Endothelial cell of umbilical vein (primary cell): ENCODE measurements at regions of chr13 and their contacts with region 1.

Region 1: DNA sequence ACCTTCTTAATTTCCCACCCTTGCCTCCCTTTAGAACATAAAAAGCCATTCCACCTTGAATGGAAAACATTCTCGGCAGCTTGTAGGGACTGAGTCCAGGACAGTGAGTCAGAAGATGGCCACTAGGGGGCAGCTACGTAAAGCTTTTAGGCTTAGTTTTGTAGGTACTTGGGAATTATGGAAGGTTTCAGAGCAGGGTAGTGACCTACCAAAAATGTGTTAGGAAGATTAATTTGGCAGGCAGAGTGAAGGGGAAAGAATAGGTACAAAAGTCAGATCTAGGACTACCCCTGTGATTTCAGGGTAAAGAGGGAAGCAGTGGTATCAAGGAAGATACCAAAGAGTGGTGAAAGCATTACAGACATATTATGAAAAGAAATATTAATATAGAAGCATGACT is 198.4 kb downstream of the NDFIP2 start:
- DNase-seq: peak; percentile 83
- H3K4me3 ChIP-seq: no peak overlapping the region
- H3K27ac ChIP-seq: no peak overlapping the region
- H3K4me1 ChIP-seq: no peaks in the 10 kb centered on the region
- H3K27me3 ChIP-seq: no peaks in the 10 kb centered on the region
- CTCF ChIP-seq: peak; percentile 70 to 80
- POLR2A ChIP-seq: no peak

Region 2: GRCh38 chr13:79724348-79725103 is 45.2 kb after region 1 on chr13:
- CTCF ChIA-PET with region 1: interaction called, 6 read pairs
- POLR2A ChIA-PET with region 1: no interaction called
- dilution Hi-C with region 1: no loop called
- intact Hi-C with region 1: loop called (anchors 1 kb)
- DNase-seq: peak; percentile 93
- H3K4me3 ChIP-seq: no peak overlapping the region
- H3K27ac ChIP-seq: peak overlapping the region; percentile 24
- H3K4me1 ChIP-seq: peaks cover 3% of the 10 kb centered on the region
- H3K27me3 ChIP-seq: no peaks in the 10 kb centered on the region
- CTCF ChIP-seq: no peak
- POLR2A ChIP-seq: no peak

Region 3: GRCh38 chr13:79782541-79783205 is 103.3 kb after region 1 on chr13:
- CTCF ChIA-PET with region 1: interaction called, 10 read pairs
- POLR2A ChIA-PET with region 1: no interaction called
- dilution Hi-C with region 1: no loop called
- intact Hi-C with region 1: no loop called
- DNase-seq: peak; percentile 93
- H3K4me3 ChIP-seq: no peak overlapping the region
- H3K27ac ChIP-seq: peak overlapping the region; percentile 19
- H3K4me1 ChIP-seq: peaks cover 16% of the 10 kb centered on the region
- H3K27me3 ChIP-seq: no peaks in the 10 kb centered on the region
- CTCF ChIP-seq: no peak
- POLR2A ChIP-seq: no peak

Region 4: DNA sequence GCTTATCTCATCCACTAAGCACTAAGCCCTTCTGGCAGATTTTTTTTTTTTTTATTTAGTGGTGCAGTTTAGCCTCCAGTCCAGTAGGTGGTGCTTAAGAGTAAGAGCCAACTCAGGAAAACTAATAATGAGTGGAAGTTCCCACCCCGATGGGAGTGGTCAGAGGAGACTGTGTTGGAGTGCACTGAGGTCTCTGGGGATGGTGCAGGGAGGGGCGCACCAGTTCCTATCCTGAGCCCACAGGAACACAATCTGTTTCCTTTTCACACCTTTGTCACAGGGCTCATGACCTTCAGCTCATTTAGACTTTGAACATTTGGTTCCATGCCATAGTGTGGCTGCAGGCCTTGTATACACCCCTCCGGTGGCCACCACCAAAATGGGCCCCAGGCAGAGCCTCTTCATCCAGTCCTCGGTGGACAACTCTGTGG is 294.2 kb after region 1 on chr13:
- CTCF ChIA-PET with region 1: no interaction called
- POLR2A ChIA-PET with region 1: no interaction called
- dilution Hi-C with region 1: no loop called
- intact Hi-C with region 1: loop called (anchors 10 kb)
- DNase-seq: no peak
- H3K4me3 ChIP-seq: no peak overlapping the region
- H3K27ac ChIP-seq: no peak overlapping the region
- H3K4me1 ChIP-seq: no peaks in the 10 kb centered on the region
- H3K27me3 ChIP-seq: no peaks in the 10 kb centered on the region
- CTCF ChIP-seq: peak; percentile 36
- POLR2A ChIP-seq: no peak

Region 5: GRCh38 chr13:80235166-80235966 is 556.0 kb after region 1 on chr13:
- CTCF ChIA-PET with region 1: interaction called, 11 read pairs
- POLR2A ChIA-PET with region 1: no interaction called
- dilution Hi-C with region 1: no loop called
- intact Hi-C with region 1: no loop called
- DNase-seq: peak; percentile 79
- H3K4me3 ChIP-seq: peak overlapping the region in 1 of 3 experiments; percentile 41
- H3K27ac ChIP-seq: peak overlapping the region; percentile 89
- H3K4me1 ChIP-seq: peaks cover 18% of the 10 kb centered on the region
- H3K27me3 ChIP-seq: no peaks in the 10 kb centered on the region
- CTCF ChIP-seq: no peak
- POLR2A ChIP-seq: no peak

Region 6: GRCh38 chr13:80630685-80631121 is 951.4 kb after region 1 on chr13:
- CTCF ChIA-PET with region 1: interaction called, 8 read pairs
- POLR2A ChIA-PET with region 1: no interaction called
- dilution Hi-C with region 1: no loop called
- intact Hi-C with region 1: loop called (anchors 5 kb)
- DNase-seq: peak; percentile 85
- H3K4me3 ChIP-seq: no peak overlapping the region
- H3K27ac ChIP-seq: peak overlapping the region; percentile 41
- H3K4me1 ChIP-seq: peaks cover 17% of the 10 kb centered on the region
- H3K27me3 ChIP-seq: no peaks in the 10 kb centered on the region
- CTCF ChIP-seq: no peak
- POLR2A ChIP-seq: no peak

Region 7: DNA sequence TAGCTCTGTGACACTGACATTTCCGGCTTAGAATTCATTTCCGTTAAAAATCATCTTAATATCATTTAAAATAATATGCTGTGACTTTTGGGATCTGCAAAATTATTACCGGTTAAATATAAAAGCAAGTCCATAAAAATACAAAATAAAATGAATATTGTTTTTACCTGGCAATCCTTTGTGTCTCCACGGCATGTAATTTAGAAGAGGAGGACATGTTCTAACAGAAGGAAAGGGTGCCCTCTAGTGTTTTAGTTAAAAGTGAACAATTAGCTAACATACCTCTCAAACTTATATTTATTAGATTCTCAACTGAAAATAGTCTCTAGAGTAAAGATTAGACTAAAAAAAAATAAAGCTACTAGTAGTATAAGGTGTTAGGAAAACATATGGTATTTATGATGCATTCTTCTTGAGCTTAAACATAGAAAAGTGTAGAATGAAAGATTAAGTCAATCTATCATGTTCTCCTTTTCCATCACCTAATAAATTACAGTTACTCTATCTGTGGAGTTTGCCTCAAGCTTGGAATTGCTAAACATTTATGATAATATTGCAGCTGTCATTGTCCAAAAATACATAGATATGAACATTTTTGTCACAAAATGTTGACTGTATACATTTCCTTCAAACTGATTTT is 1338.3 kb after region 1 on chr13:
- CTCF ChIA-PET with region 1: interaction called, 57 read pairs
- POLR2A ChIA-PET with region 1: interaction called, 3 read pairs
- dilution Hi-C with region 1: no loop called
- intact Hi-C with region 1: loop called (anchors 1 kb)
- DNase-seq: peak; percentile 57
- H3K4me3 ChIP-seq: no peak overlapping the region
- H3K27ac ChIP-seq: no peak overlapping the region
- H3K4me1 ChIP-seq: peaks cover 2% of the 10 kb centered on the region
- H3K27me3 ChIP-seq: no peaks in the 10 kb centered on the region
- CTCF ChIP-seq: peak; percentile 19 to 29
- POLR2A ChIP-seq: no peak